WTC11 (cell line): ENCODE measurements at regions of chr16 and their contacts with region 1.

Region 1: DNA sequence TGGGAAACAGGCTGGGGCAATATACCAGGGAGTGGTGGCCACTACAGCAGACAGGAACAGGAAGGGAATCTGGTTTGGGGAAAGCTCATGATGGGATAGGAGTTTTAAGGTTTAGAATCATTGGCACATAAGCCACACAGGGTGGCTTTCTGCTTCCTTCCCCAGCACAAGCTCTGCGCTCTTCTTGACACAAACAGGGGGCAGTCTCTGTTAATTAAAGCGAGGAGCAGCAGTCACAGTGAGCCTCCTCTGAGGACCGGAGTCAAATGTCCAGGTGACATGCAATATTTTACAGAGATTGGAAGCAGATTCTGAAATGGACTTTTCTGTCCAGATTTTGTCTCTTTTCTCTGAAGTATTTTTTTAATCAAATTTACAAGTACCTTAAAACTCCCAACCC is 2.8 kb upstream of the SHISA9 start:
- DNase-seq: no peak
- ATAC-seq: 0 out of 2 replicates have a peak, but pooled peaks have one; percentile 3
- H3K4me3 Mint-ChIP-seq: no peak overlapping the region
- H3K27ac Mint-ChIP-seq: no peak overlapping the region
- H3K4me1 Mint-ChIP-seq: peaks cover 36% of the 10 kb centered on the region
- H3K27me3 Mint-ChIP-seq: peaks cover 14% of the 10 kb centered on the region
- CTCF ChIP-seq: no peak

Region 2: DNA sequence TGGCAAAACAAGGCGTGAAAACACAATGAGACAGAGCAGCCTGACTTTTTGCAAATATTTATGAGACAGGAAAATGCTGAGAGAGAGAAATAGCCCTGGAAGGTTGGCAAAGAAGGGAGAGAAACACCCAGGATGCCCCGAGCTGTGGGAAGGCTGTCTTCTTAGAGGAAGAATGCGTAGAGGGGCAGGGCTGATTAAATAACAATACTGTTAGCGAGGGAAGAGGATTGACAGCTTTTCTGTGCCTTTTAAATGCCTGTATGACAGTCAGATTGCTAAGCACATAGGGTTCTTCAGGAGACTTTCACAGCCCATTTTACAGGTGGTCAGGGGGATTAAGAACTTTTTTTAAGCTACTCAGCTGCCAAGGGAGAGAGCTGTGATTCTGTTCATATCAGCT is 222.0 kb after region 1 on chr16:
- CTCF ChIA-PET with region 1: interaction called, 10 read pairs
- POLR2A ChIA-PET with region 1: no interaction called
- DNase-seq: no peak
- ATAC-seq: peak; percentile 83
- H3K4me3 Mint-ChIP-seq: no peak overlapping the region
- H3K27ac Mint-ChIP-seq: peak overlapping the region; percentile 64; the same call in 1 of the 2 replicates
- H3K4me1 Mint-ChIP-seq: peaks cover 48% of the 10 kb centered on the region
- H3K27me3 Mint-ChIP-seq: no peaks in the 10 kb centered on the region
- CTCF ChIP-seq: no peak

Region 3: DNA sequence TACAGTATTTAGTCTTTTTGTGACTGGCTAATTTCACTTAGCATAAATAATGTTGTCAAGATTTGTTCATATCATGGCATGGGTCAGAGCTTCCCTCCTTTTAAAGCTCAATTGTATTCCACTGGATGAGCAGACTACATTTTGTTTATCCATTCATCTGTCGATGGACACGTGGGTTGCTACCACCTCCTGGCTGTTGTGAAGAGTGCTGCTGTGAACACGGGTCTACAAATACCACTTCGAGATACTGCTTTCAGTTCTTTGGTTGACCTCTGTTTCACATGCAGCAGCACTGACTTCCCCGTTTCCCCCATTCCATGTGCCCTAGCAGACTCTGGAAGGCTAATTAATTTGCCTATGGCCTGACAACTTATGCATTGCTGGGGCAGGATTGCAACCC is 288.3 kb after region 1 on chr16:
- CTCF ChIA-PET with region 1: interaction called, 10 read pairs
- POLR2A ChIA-PET with region 1: no interaction called
- DNase-seq: peak; percentile 17
- ATAC-seq: peak; percentile 65
- H3K4me3 Mint-ChIP-seq: no peak overlapping the region
- H3K27ac Mint-ChIP-seq: no peak overlapping the region
- H3K4me1 Mint-ChIP-seq: peaks cover 35% of the 10 kb centered on the region
- H3K27me3 Mint-ChIP-seq: no peaks in the 10 kb centered on the region; the same call in 1 of the 2 replicates
- CTCF ChIP-seq: no peak